ENCODE measurements at regions of chr1 and their contacts with region 1.

Region 1: GRCh38 chr1:203267347-203267846 is 37.9 kb upstream of the BTG2 start:
- DNase-seq: peak; percentile 92
- ATAC-seq: peak; percentile 63
- H3K4me3 ChIP-seq: peak overlapping the region; percentile 58 to 77 (median 65)
- H3K4me3 Mint-ChIP-seq: peak overlapping the region; percentile 89
- H3K27ac ChIP-seq: peak overlapping the region; percentile 45 to 58
- H3K27ac Mint-ChIP-seq: peak overlapping the region; percentile 76
- H3K4me1 ChIP-seq: peaks cover 30 to 40% of the 10 kb centered on the region in 2 donors
- H3K4me1 Mint-ChIP-seq: peaks cover 32% of the 10 kb centered on the region
- H3K27me3 ChIP-seq: no peaks in the 10 kb centered on the region
- H3K27me3 Mint-ChIP-seq: no peaks in the 10 kb centered on the region
- CTCF ChIP-seq: peak; percentile 92

Region 2: DNA sequence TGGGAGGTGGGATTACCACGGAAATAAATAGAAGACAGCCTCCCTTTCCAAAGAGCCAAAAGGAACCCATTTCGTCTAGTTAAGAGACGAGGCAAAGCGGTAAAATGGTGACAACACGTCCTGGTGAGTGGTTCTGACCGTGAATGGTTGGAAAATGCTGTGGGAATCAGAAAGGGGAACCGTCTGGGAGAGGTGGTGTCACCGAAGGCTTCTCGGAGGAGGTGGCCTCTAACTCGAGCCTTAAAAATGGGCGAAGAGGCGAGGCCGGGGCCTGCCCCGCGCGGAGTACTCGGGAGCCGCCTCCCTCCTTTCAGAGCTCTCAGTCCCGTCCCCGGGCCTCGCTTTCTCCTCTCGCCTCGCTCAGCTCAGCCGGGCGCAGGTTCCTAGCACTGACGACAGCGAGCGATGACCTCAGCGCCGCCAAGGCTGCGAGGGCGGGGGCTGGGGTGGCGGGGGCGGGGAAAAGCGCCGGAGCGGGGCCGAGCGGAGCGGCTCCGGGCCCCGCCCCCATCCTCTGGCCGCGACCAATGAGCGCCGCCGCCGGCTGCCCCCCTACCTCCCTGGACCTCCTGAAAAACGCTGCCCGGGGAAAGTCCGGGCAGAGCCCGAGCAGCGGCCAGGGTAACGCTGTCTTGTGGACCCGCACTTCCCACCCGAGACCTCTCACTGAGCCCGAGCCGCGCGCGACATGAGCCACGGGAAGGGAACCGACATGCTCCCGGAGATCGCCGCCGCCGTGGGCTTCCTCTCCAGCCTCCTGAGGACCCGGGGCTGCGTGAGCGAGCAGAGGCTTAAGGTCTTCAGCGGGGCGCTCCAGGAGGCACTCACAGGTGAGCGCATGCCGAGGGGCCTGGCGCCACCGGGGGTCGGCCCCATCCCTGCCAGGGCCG is 37.8 kb after region 1 on chr1 and contains the start of gene BTG2:
- CTCF ChIA-PET with region 1: interaction called, 396 read pairs
- POLR2A ChIA-PET with region 1: interaction called, 307 read pairs
- intact Hi-C with region 1: no loop called
- DNase-seq: peak; percentile 96
- ATAC-seq: peak; percentile 80
- H3K4me3 ChIP-seq: peak within 1 kb of the TSS; percentile 96 to 99 (median 99)
- H3K4me3 Mint-ChIP-seq: peak within 1 kb of the TSS; percentile 99
- H3K27ac ChIP-seq: peak within 1 kb of the TSS; percentile 100
- H3K27ac Mint-ChIP-seq: peak within 1 kb of the TSS; percentile 99
- H3K4me1 ChIP-seq: peaks cover 65 to 78% of the 10 kb centered on the region in 2 donors
- H3K4me1 Mint-ChIP-seq: peaks cover 70% of the 10 kb centered on the region
- H3K27me3 ChIP-seq: no peaks in the 10 kb centered on the region
- H3K27me3 Mint-ChIP-seq: no peaks in the 10 kb centered on the region
- CTCF ChIP-seq: no peak
- total RNA-seq, gene BTG2: 505 and 508 TPM in 2 replicates

Region 3: GRCh38 chr1:203351037-203352013 is 83.9 kb after region 1 on chr1 and contains the start of gene FMOD:
- CTCF ChIA-PET with region 1: interaction called, 1,776 read pairs
- POLR2A ChIA-PET with region 1: no interaction called
- intact Hi-C with region 1: no loop called
- DNase-seq: peak; percentile 32
- ATAC-seq: no peak
- H3K4me3 ChIP-seq: no peak within 1 kb of the TSS
- H3K4me3 Mint-ChIP-seq: no peak within 1 kb of the TSS
- H3K27ac ChIP-seq: no peak within 1 kb of the TSS
- H3K27ac Mint-ChIP-seq: no peak within 1 kb of the TSS
- H3K4me1 ChIP-seq: peaks cover 6 to 10% of the 10 kb centered on the region in 2 donors
- H3K4me1 Mint-ChIP-seq: peaks cover 3% of the 10 kb centered on the region
- H3K27me3 ChIP-seq: peaks cover 0 to 32% (median 5%) of the 10 kb centered on the region in 4 experiments
- H3K27me3 Mint-ChIP-seq: peaks cover 38% of the 10 kb centered on the region
- CTCF ChIP-seq: no peak
- total RNA-seq, gene FMOD: not detected in 2 replicates

Region 4: GRCh38 chr1:203381151-203381751 is 113.9 kb after region 1 on chr1:
- CTCF ChIA-PET with region 1: interaction called, 31 read pairs
- POLR2A ChIA-PET with region 1: no interaction called
- intact Hi-C with region 1: loop called (anchors 2 kb)
- DNase-seq: peak; percentile 82
- ATAC-seq: peak; percentile 89
- H3K4me3 ChIP-seq: peak overlapping the region in 2 of 5 experiments; percentile 34 to 49
- H3K4me3 Mint-ChIP-seq: peak overlapping the region; percentile 72
- H3K27ac ChIP-seq: peak overlapping the region; percentile 73 to 82
- H3K27ac Mint-ChIP-seq: peak overlapping the region; percentile 76
- H3K4me1 ChIP-seq: peaks cover 38 to 45% of the 10 kb centered on the region in 2 donors
- H3K4me1 Mint-ChIP-seq: peaks cover 45% of the 10 kb centered on the region
- H3K27me3 ChIP-seq: no peaks in the 10 kb centered on the region
- H3K27me3 Mint-ChIP-seq: no peaks in the 10 kb centered on the region
- CTCF ChIP-seq: no peak

Region 5: GRCh38 chr1:203475012-203475981 is 207.9 kb after region 1 on chr1 and contains the start of gene PRELP:
- CTCF ChIA-PET with region 1: interaction called, 10 read pairs
- POLR2A ChIA-PET with region 1: no interaction called
- intact Hi-C with region 1: no loop called
- DNase-seq: no peak
- ATAC-seq: no peak
- H3K4me3 ChIP-seq: no peak within 1 kb of the TSS
- H3K4me3 Mint-ChIP-seq: no peak within 1 kb of the TSS
- H3K27ac ChIP-seq: no peak within 1 kb of the TSS
- H3K27ac Mint-ChIP-seq: no peak within 1 kb of the TSS
- H3K4me1 ChIP-seq: peaks cover 0 to under 1% of the 10 kb centered on the region in 2 donors
- H3K4me1 Mint-ChIP-seq: peaks cover 9% of the 10 kb centered on the region
- H3K27me3 ChIP-seq: no peaks in the 10 kb centered on the region
- H3K27me3 Mint-ChIP-seq: peaks cover 33% of the 10 kb centered on the region
- CTCF ChIP-seq: no peak
- total RNA-seq, gene PRELP: not detected in 2 replicates

Region 6: DNA sequence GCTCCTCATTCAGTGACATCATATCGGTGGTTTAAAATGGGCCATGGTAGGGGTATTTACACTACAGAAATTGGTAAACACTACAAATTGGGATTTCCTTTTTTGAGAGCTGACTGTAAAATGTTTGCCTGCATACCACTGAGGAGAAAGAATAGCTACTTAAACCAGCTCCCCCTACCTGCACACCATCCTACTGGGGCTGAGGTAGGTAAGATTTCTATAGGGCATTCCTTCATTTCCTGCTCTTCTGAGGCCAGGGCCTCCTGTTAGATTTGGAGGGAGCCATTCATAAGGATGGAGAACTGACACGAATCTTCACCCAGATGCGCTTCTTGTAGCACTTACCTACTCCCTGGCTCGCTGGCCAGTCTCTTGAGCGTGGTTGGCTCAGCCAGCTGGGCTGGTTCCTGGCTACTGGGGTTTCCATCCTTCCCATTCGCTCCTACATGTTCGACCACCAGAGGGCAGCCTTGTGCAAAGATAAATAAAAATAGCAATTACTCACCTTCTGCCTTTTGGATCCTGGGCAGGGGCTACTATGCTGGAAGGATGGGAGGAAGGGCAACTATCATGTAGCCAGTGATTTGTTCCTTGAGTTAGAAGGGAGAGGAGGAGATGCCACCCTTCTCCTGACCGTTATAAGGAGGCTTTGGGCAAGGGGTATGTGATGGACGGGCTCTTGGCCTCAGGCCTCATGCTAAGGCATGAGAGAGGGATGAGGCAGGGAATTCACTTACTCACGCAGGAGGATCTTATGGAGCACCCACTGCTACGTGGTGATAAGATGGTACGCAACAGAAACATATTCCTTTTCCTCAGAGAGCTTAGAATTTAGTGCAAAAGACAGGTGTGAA is 237.2 kb after region 1 on chr1:
- CTCF ChIA-PET with region 1: interaction called, 34 read pairs
- POLR2A ChIA-PET with region 1: no interaction called
- intact Hi-C with region 1: no loop called
- DNase-seq: peak; percentile 80
- ATAC-seq: peak; percentile 72
- H3K4me3 ChIP-seq: no peak overlapping the region
- H3K4me3 Mint-ChIP-seq: no peak overlapping the region
- H3K27ac ChIP-seq: no peak overlapping the region
- H3K27ac Mint-ChIP-seq: no peak overlapping the region
- H3K4me1 ChIP-seq: no peaks in the 10 kb centered on the region
- H3K4me1 Mint-ChIP-seq: peaks cover 2% of the 10 kb centered on the region
- H3K27me3 ChIP-seq: peaks cover 0 to 7% (median 0%) of the 10 kb centered on the region in 4 experiments
- H3K27me3 Mint-ChIP-seq: peaks cover 16% of the 10 kb centered on the region
- CTCF ChIP-seq: peak; percentile 93